Heart right ventricle (tissue), 16 donors: ENCODE measurements at regions of chr7 and their contacts with region 1.

Region 1: GRCh38 chr7:92343719-92344118 is 97.9 kb downstream of the ANKIB1 start:
- DNase-seq: no peak
- ATAC-seq: no peak
- H3K4me3 ChIP-seq: no peak overlapping the region
- H3K27ac ChIP-seq: no peak overlapping the region
- H3K4me1 ChIP-seq: no peaks in the 10 kb centered on the region
- H3K27me3 ChIP-seq: no peaks in the 10 kb centered on the region
- CTCF ChIP-seq: no peak

Region 2: DNA sequence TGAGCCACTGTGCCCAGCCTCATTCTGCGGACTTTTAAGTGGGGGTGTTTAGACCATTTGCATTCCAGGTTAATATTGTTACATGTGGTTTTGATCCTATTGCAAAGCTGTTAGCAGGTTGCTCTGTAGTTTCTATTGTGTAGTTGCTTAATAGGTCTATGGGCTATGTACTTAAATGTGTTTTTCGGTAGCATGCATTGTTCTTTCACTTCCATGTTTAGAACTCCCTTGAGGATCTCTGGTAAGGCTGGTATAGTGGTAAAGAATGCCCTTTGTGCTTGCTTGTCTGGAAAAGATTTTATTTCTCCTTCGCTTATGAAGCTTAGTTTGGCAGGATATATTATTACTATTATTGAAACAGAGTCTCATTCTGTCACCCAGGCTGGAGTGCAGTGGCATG is 151.4 kb before region 1 on chr7:
- intact Hi-C with region 1: loop called in 1 of 10 experiments (anchors 1 kb)
- DNase-seq: no peak
- ATAC-seq: no peak
- H3K4me3 ChIP-seq: no peak overlapping the region
- H3K27ac ChIP-seq: no peak overlapping the region
- H3K4me1 ChIP-seq: no peaks in the 10 kb centered on the region
- H3K27me3 ChIP-seq: no peaks in the 10 kb centered on the region
- CTCF ChIP-seq: no peak